ENCODE measurements at regions of chr13 and their contacts with region 1.

Region 1: GRCh38 chr13:32642316-32642715 is 56.1 kb downstream of the PDS5B start:
- DNase-seq: no peak
- ATAC-seq: no peak
- H3K4me3 ChIP-seq: no peak overlapping the region
- H3K27ac ChIP-seq: no peak overlapping the region
- H3K4me1 ChIP-seq: peaks cover 21% of the 10 kb centered on the region
- CTCF ChIP-seq: no peak
- EP300 ChIP-seq: no peak
- POLR2A ChIP-seq: no peak
- RAD21 ChIP-seq: no peak

Region 2: DNA sequence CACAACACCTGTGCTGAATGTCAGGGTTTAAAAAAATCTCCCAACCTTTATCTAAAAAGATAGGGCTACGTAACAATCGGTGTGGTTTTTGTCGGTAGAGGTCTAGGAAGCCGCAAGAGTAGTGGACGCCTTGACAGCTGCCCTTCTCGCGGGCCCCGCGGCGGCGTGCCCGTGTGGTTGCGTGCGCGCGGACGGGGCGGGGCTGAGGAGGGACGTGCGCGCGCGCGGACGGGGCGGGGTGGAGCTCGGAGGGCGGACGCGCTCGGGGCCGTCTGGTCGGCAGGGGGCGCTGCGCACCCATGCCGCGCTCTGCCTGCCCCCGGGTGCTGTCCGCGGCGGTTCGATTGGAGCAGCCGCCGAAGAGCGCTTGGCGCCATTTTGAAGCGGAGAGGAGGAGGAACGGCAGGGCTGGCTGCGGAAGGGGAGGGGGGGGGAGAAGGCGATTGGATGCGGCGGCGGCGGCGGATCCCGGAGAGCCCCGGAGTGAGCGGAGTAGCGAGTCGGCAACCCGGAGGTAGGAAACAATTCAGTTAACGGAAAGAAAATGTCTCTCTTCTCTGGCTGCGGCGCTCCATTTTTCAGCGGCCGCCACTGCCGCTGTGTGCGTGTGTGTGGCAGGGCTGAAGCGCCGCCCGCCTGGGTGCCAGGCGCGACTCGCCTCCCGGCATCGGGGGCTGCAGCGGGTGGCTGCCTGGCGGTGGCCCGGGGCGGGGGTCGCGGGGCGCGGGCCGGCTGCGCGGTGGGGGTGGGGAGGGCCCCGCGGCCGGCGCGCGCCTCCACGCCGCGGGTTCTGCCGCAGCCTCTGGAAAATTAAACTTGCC is 56.0 kb before region 1 on chr13 and contains the start of gene PDS5B:
- CTCF ChIA-PET with region 1: interaction called, 16 read pairs
- POLR2A ChIA-PET with region 1: no interaction called
- DNase-seq: peak; percentile 62 to 89
- ATAC-seq: peak; percentile 90 to 97
- H3K4me3 ChIP-seq: peak within 1 kb of the TSS; percentile 98
- H3K27ac ChIP-seq: peak within 1 kb of the TSS; percentile 99 to 100
- H3K4me1 ChIP-seq: peaks cover 9% of the 10 kb centered on the region; the same call in 2 of the 3 replicates
- CTCF ChIP-seq: peak; percentile 81
- EP300 ChIP-seq: no peak
- POLR2A ChIP-seq: no peak; the same call in 1 of the 2 replicates
- RAD21 ChIP-seq: peak; percentile 65 to 93
- polyA plus RNA-seq, gene PDS5B: 12.7 and 16.0 TPM in 2 replicates

Region 3: GRCh38 chr13:32811297-32811800 is 169.0 kb after region 1 on chr13:
- CTCF ChIA-PET with region 1: no interaction called
- POLR2A ChIA-PET with region 1: no interaction called
- DNase-seq: no peak
- ATAC-seq: 0 out of 6 replicates have a peak, but pooled peaks of 1 of the 2 experiments have one; percentile 26
- H3K4me3 ChIP-seq: no peak overlapping the region
- H3K27ac ChIP-seq: no peak overlapping the region
- H3K4me1 ChIP-seq: no peaks in the 10 kb centered on the region
- CTCF ChIP-seq: no peak
- EP300 ChIP-seq: no peak
- POLR2A ChIP-seq: no peak
- RAD21 ChIP-seq: no peak

Measured in A549 (cell line).